Caco-2 (cell line): ENCODE measurements at regions of chr9 and their contacts with region 1.

Region 1: DNA sequence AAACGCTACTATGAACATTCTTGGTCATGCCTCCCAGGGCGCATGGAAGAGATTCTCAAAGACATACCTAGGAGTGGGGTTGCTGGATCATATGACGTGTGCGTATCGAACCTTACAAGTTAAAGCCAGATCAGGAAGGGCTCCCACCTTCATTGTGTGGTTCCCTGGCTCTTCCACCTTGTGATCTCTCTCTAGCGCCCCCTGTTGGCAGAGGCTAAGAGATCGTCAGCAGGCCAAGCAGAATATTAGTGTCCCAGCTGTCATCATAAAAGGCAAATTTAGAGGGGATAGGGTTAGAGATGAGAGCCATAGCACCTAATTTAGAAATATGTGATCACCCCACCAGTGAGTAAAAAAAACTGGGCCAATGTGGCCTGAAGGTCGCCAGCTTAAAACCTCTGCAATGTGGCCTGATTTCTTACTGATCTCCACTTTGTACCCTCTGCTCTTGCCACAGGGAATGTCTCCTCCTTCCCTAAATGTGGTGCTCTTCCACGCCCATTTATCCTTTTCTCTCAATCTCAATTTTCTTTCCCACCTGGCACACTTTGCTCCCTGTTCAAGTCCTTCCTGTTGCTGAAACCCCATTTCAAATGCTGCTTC is 91.7 kb upstream of the SHB start:
- DNase-seq: peak; percentile 64 to 75
- H3K4me3 ChIP-seq: no peak overlapping the region
- H3K4me3 Mint-ChIP-seq: no peak overlapping the region
- H3K27ac Mint-ChIP-seq: no peak overlapping the region
- H3K4me1 ChIP-seq: no peaks in the 10 kb centered on the region
- H3K4me1 Mint-ChIP-seq: no peaks in the 10 kb centered on the region
- H3K27me3 ChIP-seq: no peaks in the 10 kb centered on the region
- H3K27me3 Mint-ChIP-seq: no peaks in the 10 kb centered on the region
- CTCF ChIP-seq: peak; percentile 78 to 81

Region 2: GRCh38 chr9:37852222-37852621 is 308.5 kb before region 1 on chr9:
- CTCF ChIA-PET with region 1: no interaction called
- POLR2A ChIA-PET with region 1: no interaction called
- intact Hi-C with region 1: no loop called
- DNase-seq: no peak
- H3K4me3 ChIP-seq: no peak overlapping the region
- H3K4me3 Mint-ChIP-seq: no peak overlapping the region
- H3K27ac Mint-ChIP-seq: no peak overlapping the region
- H3K4me1 ChIP-seq: no peaks in the 10 kb centered on the region
- H3K4me1 Mint-ChIP-seq: no peaks in the 10 kb centered on the region
- H3K27me3 ChIP-seq: no peaks in the 10 kb centered on the region
- H3K27me3 Mint-ChIP-seq: no peaks in the 10 kb centered on the region
- CTCF ChIP-seq: no peak

Region 3: DNA sequence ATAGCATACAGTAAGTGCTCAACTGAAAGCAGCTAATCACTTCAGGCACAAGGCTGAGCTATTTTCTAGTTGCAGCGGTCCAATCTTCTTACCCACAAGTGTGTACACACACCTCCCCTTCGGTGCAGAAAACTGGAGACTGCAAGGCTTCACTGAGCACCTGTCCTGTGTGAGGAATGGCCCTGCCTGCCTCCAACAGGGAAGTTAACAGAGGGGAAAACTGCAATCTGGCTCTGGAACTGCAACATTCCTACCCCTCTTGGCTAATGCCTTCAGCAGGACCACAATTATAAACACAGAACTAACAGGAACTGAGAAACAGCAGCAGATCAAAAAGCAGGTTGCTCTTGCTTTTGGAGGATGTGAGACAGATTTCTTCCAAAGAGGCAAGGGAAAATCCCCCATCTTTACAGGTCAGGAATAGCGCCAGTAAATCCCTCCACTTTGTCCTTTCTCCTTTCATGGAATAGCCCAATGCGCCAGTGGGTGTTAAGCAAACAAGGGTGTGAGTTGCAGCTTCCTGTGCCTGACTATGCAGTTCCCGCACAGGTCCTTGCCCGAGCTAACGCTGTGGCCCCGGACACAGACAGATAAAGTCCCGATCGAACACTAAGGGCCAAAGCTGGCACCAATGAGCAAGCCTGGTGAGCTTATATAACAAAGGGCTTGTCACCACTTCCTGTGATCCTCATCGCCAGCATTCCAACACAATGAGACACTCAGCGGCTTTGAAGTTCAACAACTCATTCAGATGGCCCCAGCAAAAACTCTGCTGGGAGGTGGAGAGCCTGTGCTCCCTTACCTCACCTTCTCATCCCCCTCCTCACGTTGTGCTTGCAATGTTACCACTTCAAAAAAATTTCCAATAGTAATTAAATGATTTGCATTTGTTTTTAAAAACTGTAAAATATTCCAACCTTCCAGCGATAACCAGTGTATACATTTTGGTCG is 113.1 kb before region 1 on chr9:
- CTCF ChIA-PET with region 1: no interaction called
- POLR2A ChIA-PET with region 1: no interaction called
- intact Hi-C with region 1: no loop called
- DNase-seq: peak; percentile 79 to 90
- H3K4me3 ChIP-seq: peak overlapping the region; percentile 17
- H3K4me3 Mint-ChIP-seq: peak overlapping the region; percentile 79
- H3K27ac Mint-ChIP-seq: peak overlapping the region; percentile 100
- H3K4me1 ChIP-seq: peaks cover 62% of the 10 kb centered on the region
- H3K4me1 Mint-ChIP-seq: peaks cover 51% of the 10 kb centered on the region
- H3K27me3 ChIP-seq: no peaks in the 10 kb centered on the region
- H3K27me3 Mint-ChIP-seq: no peaks in the 10 kb centered on the region
- CTCF ChIP-seq: no peak

Region 4: GRCh38 chr9:38088006-38088925 is 72.4 kb before region 1 on chr9:
- CTCF ChIA-PET with region 1: no interaction called
- POLR2A ChIA-PET with region 1: no interaction called
- intact Hi-C with region 1: loop called (anchors 1 kb)
- DNase-seq: peak; percentile 74 to 86
- H3K4me3 ChIP-seq: no peak overlapping the region
- H3K4me3 Mint-ChIP-seq: no peak overlapping the region
- H3K27ac Mint-ChIP-seq: no peak overlapping the region
- H3K4me1 ChIP-seq: no peaks in the 10 kb centered on the region
- H3K4me1 Mint-ChIP-seq: peaks cover 5% of the 10 kb centered on the region
- H3K27me3 ChIP-seq: no peaks in the 10 kb centered on the region
- H3K27me3 Mint-ChIP-seq: no peaks in the 10 kb centered on the region
- CTCF ChIP-seq: peak; percentile 92 to 93

Region 5: DNA sequence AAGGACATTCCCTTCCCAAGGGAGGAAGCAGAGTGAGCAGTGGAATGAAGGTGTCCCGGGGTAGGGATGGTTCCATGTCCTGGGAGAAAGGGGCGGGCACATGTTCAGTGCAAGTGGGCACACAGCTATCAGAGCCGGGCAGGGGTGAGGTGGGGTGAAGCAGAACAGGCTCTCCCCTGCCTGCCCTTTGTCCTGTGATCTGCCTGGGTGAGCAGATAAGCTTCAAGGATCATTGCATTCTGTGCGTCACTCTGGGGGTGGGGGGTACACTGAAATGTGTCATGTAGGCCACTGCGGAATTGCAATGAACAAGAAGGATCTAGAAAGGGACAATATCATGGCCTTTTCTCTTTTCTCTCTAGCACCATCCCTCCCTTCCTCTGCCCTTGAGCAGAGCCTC is 30.0 kb before region 1 on chr9:
- CTCF ChIA-PET with region 1: no interaction called
- POLR2A ChIA-PET with region 1: no interaction called
- intact Hi-C with region 1: no loop called
- DNase-seq: peak in 1 of 2 experiments; percentile 21
- H3K4me3 ChIP-seq: no peak overlapping the region
- H3K4me3 Mint-ChIP-seq: no peak overlapping the region
- H3K27ac Mint-ChIP-seq: no peak overlapping the region
- H3K4me1 ChIP-seq: peaks cover 4% of the 10 kb centered on the region; the same call in 1 of the 2 replicates
- H3K4me1 Mint-ChIP-seq: no peaks in the 10 kb centered on the region
- H3K27me3 ChIP-seq: no peaks in the 10 kb centered on the region
- H3K27me3 Mint-ChIP-seq: peaks cover 3% of the 10 kb centered on the region
- CTCF ChIP-seq: no peak

Region 6: DNA sequence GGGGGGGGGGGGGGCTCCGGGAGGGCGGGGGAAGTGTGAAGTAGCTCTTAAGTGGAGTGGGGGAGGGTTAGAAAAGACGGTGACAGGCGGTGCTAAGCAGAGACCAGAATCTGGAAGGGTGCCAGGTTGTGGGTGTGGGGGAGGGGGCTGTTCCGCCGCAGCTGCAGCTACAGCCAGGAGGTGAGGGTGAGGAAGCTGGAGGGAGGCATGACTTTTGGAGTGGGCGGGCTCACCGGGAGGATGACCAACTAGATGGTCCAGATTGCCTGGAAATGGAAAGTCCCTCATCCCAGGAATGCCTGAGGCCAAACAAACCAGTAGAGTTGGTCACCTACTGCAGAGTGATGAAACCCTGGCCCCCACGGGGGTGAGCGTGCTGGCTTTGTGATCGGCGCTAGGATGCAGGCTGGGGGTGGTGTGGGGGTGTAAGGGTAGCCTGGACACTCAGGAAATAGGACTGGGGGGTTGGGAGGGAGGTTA is 66.4 kb after region 1 on chr9:
- CTCF ChIA-PET with region 1: no interaction called
- POLR2A ChIA-PET with region 1: no interaction called
- intact Hi-C with region 1: loop called (anchors 5 kb)
- DNase-seq: peak; percentile 92 to 98
- H3K4me3 ChIP-seq: peak overlapping the region; percentile 25
- H3K4me3 Mint-ChIP-seq: peak overlapping the region; percentile 82
- H3K27ac Mint-ChIP-seq: peak overlapping the region; percentile 57
- H3K4me1 ChIP-seq: peaks cover 30% of the 10 kb centered on the region
- H3K4me1 Mint-ChIP-seq: peaks cover 10% of the 10 kb centered on the region
- H3K27me3 ChIP-seq: no peaks in the 10 kb centered on the region
- H3K27me3 Mint-ChIP-seq: no peaks in the 10 kb centered on the region
- CTCF ChIP-seq: no peak

Region 7: GRCh38 chr9:38263532-38263931 is 102.8 kb after region 1 on chr9:
- CTCF ChIA-PET with region 1: no interaction called
- POLR2A ChIA-PET with region 1: no interaction called
- intact Hi-C with region 1: loop called (anchors 2 kb)
- DNase-seq: peak in 1 of 2 experiments; percentile 35
- H3K4me3 ChIP-seq: no peak overlapping the region
- H3K4me3 Mint-ChIP-seq: no peak overlapping the region
- H3K27ac Mint-ChIP-seq: no peak overlapping the region
- H3K4me1 ChIP-seq: no peaks in the 10 kb centered on the region
- H3K4me1 Mint-ChIP-seq: no peaks in the 10 kb centered on the region
- H3K27me3 ChIP-seq: no peaks in the 10 kb centered on the region
- H3K27me3 Mint-ChIP-seq: no peaks in the 10 kb centered on the region
- CTCF ChIP-seq: peak; percentile 27 to 50

Region 8: DNA sequence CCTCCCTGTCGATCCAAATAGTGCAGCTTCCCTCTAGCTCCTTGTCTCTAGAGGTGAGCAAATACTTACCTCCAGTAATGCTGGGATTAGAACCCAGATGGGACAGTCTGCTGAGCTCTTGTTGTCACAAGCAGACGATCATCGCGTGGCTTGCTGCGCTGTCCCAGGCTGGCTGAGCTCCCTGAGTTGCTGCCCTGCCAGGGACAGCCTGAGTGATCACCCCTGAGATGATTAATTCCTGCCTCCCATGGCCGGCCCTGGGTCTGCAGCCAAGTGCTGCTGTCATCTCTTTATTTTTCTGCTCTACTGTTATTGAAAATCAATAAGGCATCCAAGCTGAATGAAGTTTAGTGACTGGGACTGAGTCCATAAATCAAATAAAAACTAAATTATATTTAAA is 137.8 kb after region 1 on chr9:
- CTCF ChIA-PET with region 1: no interaction called
- POLR2A ChIA-PET with region 1: no interaction called
- intact Hi-C with region 1: no loop called
- DNase-seq: no peak
- H3K4me3 ChIP-seq: no peak overlapping the region
- H3K4me3 Mint-ChIP-seq: no peak overlapping the region
- H3K27ac Mint-ChIP-seq: no peak overlapping the region
- H3K4me1 ChIP-seq: no peaks in the 10 kb centered on the region
- H3K4me1 Mint-ChIP-seq: no peaks in the 10 kb centered on the region
- H3K27me3 ChIP-seq: no peaks in the 10 kb centered on the region
- H3K27me3 Mint-ChIP-seq: peaks cover 13% of the 10 kb centered on the region
- CTCF ChIP-seq: no peak